Dorsolateral prefrontal cortex (tissue), 120 donors: ENCODE measurements at regions of chr3 and their contacts with region 1.

Region 1: GRCh38 chr3:179882292-179882691 is 154.4 kb downstream of the PEX5L start:
- DNase-seq: no peak
- H3K4me3 ChIP-seq: peak overlapping the region in 2 of 59 donors; percentile 1 to 22
- H3K27ac ChIP-seq: peak overlapping the region in 53 of 59 donors; percentile 1 to 84 (median 65)
- H3K27me3 ChIP-seq: no peaks in the 10 kb centered on the region
- CTCF ChIP-seq: no peak

Region 2: GRCh38 chr3:179653096-179653797 is 229.0 kb before region 1 on chr3:
- intact Hi-C with region 1: no loop called
- DNase-seq: peak; percentile 54 to 84 (median 77)
- H3K4me3 ChIP-seq: peak overlapping the region; percentile 67 to 94 (median 84)
- H3K27ac ChIP-seq: peak overlapping the region; percentile 72 to 99 (median 96)
- H3K27me3 ChIP-seq: no peaks in the 10 kb centered on the region
- CTCF ChIP-seq: peak in 25 of 56 donors; percentile 10 to 48 (median 23)

Region 3: GRCh38 chr3:179819379-179819778 is 62.9 kb before region 1 on chr3:
- intact Hi-C with region 1: loop called in 1 of 2 experiments (anchors 5 kb)
- DNase-seq: no peak
- H3K4me3 ChIP-seq: no peak overlapping the region
- H3K27ac ChIP-seq: peak overlapping the region in 22 of 59 donors; percentile 3 to 65 (median 40)
- H3K27me3 ChIP-seq: no peaks in the 10 kb centered on the region
- CTCF ChIP-seq: no peak

Region 4: GRCh38 chr3:180188512-180189309 is 306.4 kb after region 1 on chr3:
- intact Hi-C with region 1: no loop called
- DNase-seq: no peak
- H3K4me3 ChIP-seq: no peak overlapping the region
- H3K27ac ChIP-seq: peak overlapping the region in 2 of 59 donors; percentile 3 to 19
- H3K27me3 ChIP-seq: no peaks in the 10 kb centered on the region
- CTCF ChIP-seq: no peak

Region 5: GRCh38 chr3:180358179-180358578 is 475.9 kb after region 1 on chr3:
- intact Hi-C with region 1: no loop called
- DNase-seq: no peak
- H3K4me3 ChIP-seq: no peak overlapping the region
- H3K27ac ChIP-seq: peak overlapping the region in 7 of 59 donors; percentile 1 to 50 (median 24)
- H3K27me3 ChIP-seq: no peaks in the 10 kb centered on the region
- CTCF ChIP-seq: no peak